ENCODE measurements at regions of chr9 and their contacts with region 1.

Region 1: DNA sequence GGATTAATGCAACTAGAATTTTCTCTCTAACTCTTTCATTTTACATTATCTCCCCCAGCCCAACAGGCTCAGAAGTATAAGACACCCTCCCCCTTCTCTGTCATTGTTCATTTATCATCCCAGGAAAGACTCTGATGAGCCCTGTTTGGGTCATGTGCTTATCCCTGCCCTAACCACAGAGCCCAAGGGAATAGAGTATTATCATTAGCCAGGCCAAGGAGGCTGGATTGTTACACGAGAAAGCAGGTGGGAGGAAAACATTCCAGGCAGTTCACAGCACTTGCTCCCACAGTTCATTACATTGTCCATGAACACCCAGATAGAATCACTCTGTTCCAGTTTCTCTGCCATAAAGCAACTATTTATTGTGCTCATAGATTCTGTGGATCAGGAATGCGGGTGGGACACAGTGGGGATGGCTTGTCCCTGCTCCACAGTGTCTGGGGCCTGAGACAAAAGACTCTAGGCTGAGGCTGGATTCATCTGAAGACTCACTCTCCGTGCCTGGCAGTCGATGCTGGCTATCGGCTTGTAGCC is 59.5 kb upstream of the TMEM215 start:
- DNase-seq: no peak
- H3K4me3 ChIP-seq: no peak overlapping the region
- H3K27ac ChIP-seq: no peak overlapping the region
- H3K4me1 ChIP-seq: no peaks in the 10 kb centered on the region
- H3K27me3 ChIP-seq: no peaks in the 10 kb centered on the region
- CTCF ChIP-seq: no peak
- POLR2A ChIP-seq: no peak

Region 2: GRCh38 chr9:32647671-32648070 is 76.2 kb before region 1 on chr9:
- intact Hi-C with region 1: loop called (anchors 10 kb)
- DNase-seq: no peak
- H3K4me3 ChIP-seq: no peak overlapping the region
- H3K27ac ChIP-seq: no peak overlapping the region
- H3K4me1 ChIP-seq: no peaks in the 10 kb centered on the region
- H3K27me3 ChIP-seq: no peaks in the 10 kb centered on the region
- CTCF ChIP-seq: no peak
- POLR2A ChIP-seq: no peak